Activated CD4-positive, alpha-beta memory T cell treated with anti-CD3 and anti-CD28 coated beads for 36 hours (primary cell): ENCODE measurements at regions of chr14 and their contacts with region 1.

Region 1: DNA sequence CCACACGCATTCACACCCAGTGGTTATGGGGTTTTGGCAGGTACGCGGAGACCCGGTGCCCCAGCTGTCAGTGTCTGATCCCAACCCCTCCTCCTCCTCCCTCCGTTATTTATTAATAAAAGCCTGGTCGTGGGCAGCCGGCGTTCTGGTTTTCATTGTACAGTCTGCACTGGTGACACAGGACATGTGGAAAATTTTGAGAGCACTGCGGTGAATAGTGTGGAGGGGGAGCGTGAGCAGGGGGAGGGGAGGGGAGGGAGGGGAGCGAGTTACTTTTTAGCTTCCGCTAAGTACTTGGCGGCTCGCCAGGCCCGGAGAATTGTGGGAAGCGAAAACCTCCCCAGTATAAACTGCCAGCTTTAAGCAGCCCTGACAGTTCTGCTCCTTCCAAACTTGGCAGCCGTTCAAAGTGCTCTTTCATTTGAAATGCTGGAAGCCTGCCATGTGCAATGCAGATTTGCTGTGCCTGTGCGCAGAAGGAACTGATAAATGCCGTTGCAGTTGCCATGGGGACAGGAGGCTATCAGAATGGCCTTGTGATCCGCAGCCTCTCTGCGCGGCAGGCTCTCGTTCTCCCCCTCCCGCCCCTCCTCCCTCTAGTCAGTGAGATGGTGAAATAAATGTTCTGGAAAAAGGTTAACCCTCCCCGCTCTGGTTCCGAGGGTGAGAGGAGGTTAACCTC is 11.7 kb upstream of the IRF2BPL start:
- DNase-seq: peak; percentile 97
- H3K4me3 Mint-ChIP-seq: peak overlapping the region; percentile 77
- H3K27ac Mint-ChIP-seq: peak overlapping the region; percentile 99
- H3K4me1 Mint-ChIP-seq: peaks cover 88% of the 10 kb centered on the region
- H3K27me3 Mint-ChIP-seq: no peaks in the 10 kb centered on the region

Region 2: DNA sequence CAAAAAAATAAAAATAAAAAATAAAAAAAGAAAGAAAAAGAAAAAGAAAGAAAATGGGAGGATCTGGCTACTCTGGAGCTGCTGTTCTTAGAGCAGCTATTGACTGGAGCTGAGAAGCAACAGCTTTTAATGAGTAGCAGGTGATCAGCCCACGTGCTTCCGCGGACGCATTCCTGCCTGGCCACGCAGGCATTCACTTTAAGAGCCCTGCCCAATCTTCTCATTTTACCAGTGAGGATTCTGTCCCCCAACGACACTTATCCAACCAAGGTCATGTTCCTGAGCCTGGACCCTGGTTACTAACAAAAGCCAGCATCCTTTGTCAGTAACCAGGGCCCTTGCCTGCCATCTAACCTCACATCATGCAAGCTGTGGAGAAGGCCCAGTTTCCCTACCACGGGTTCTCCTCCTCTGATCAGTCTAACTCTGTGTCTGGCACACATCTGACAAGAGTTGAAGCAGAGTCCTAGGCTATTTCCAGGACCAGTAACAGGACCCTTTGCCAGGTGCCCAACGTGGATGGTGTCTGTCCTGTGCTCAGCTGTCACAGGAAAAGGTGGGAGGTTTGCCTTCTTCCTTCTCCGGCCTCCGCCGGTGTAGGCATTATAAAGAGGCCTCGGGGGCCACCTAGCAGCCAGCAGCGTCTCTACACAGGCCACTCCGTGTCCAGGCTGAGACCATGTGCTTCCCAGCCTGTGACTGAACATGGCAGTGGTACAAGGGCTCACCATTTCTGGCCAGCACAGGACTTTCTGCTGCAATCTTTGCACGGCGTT is 949.4 kb before region 1 on chr14:
- CTCF ChIA-PET with region 1: no interaction called
- POLR2A ChIA-PET with region 1: no interaction called
- intact Hi-C with region 1: no loop called
- DNase-seq: no peak
- H3K4me3 Mint-ChIP-seq: no peak overlapping the region
- H3K27ac Mint-ChIP-seq: no peak overlapping the region
- H3K4me1 Mint-ChIP-seq: no peaks in the 10 kb centered on the region
- H3K27me3 Mint-ChIP-seq: no peaks in the 10 kb centered on the region

Region 3: DNA sequence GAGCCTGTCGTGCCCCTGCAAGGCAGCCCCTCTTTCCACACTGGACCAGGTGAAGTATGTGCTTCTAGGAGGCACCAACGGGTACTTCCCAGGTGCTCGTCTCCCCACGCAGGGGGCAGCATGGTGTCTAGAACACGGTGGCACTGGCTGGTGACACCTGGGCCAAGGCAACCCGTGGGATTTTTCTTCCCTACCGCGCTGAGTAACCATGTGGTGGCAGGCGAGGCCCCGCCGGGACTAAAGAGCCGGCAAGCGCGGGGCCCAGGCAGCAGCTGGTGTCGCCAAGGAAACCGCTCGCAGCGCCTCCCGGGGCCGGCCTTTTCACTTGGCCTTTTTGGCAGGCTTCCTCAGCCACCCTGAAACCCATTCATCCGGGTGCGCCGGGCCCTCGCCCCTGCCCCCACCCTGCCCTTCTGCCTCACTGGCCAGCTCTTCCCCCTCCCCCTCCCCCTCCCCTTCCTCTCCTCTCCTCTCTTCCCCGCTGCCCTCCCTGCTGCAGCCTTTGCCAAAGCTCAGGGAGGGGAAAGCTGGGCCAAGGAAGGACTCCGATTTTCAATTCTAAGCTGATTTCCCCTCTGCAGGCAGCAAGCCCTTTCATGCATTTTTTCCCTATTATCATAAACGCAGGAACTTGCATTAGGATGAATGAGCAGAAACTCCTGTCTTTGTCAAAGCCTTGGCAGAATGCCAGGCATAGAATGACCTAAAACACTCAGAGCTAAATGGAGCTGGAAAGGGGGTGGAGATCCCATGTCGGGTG is 92.9 kb before region 1 on chr14:
- CTCF ChIA-PET with region 1: interaction called, 10 read pairs
- POLR2A ChIA-PET with region 1: no interaction called
- intact Hi-C with region 1: loop called (anchors 1 kb)
- DNase-seq: peak; percentile 91
- H3K4me3 Mint-ChIP-seq: peak overlapping the region; percentile 29
- H3K27ac Mint-ChIP-seq: peak overlapping the region; percentile 23
- H3K4me1 Mint-ChIP-seq: peaks cover 43% of the 10 kb centered on the region
- H3K27me3 Mint-ChIP-seq: no peaks in the 10 kb centered on the region

Region 4: DNA sequence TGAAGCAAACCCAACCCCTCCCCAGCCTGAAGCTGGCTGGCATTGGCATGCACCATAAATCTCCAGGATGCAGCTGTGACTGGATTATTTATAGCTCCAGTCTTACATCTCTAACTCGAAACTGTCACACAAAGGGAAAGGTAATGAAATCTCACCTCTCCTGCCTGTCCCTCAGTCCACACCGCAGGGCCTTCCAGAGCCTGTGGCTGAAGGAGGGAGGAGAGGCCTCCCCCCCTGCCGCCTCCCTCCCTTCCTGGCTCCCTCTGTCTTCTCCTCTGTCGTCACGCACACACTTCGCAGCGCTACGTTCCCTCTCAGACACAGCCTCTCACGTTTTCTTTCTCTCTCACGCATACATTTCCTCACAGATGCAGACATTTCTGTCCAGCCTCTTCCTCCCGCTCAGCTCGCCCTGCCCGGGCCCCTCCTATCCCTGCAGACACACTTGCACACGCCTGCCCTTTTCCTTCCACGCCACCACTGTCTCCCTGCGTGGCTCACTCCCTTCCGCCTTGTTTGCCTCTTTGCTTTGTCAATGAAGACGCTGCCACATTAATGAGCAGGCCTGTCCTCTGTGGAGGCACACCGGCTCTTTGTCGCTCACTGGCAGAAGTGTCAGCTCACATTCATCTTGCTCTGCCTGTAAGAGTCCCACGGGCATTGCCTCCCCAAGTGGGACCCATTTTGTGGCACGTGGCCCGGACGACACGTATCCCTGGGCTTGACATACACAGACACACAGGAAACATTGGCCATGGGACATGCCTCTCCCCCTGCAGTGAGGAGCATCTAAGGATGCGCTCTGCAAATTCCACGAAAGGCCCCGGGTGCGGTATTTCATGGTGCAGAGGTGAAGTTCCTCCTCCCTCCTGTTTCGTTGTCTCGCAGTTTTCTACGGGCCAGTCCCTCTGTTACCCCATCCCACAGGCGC is 39.6 kb before region 1 on chr14:
- CTCF ChIA-PET with region 1: no interaction called
- POLR2A ChIA-PET with region 1: no interaction called
- intact Hi-C with region 1: no loop called
- DNase-seq: no peak
- H3K4me3 Mint-ChIP-seq: no peak overlapping the region
- H3K27ac Mint-ChIP-seq: no peak overlapping the region
- H3K4me1 Mint-ChIP-seq: peaks cover 10% of the 10 kb centered on the region
- H3K27me3 Mint-ChIP-seq: no peaks in the 10 kb centered on the region

Region 5: DNA sequence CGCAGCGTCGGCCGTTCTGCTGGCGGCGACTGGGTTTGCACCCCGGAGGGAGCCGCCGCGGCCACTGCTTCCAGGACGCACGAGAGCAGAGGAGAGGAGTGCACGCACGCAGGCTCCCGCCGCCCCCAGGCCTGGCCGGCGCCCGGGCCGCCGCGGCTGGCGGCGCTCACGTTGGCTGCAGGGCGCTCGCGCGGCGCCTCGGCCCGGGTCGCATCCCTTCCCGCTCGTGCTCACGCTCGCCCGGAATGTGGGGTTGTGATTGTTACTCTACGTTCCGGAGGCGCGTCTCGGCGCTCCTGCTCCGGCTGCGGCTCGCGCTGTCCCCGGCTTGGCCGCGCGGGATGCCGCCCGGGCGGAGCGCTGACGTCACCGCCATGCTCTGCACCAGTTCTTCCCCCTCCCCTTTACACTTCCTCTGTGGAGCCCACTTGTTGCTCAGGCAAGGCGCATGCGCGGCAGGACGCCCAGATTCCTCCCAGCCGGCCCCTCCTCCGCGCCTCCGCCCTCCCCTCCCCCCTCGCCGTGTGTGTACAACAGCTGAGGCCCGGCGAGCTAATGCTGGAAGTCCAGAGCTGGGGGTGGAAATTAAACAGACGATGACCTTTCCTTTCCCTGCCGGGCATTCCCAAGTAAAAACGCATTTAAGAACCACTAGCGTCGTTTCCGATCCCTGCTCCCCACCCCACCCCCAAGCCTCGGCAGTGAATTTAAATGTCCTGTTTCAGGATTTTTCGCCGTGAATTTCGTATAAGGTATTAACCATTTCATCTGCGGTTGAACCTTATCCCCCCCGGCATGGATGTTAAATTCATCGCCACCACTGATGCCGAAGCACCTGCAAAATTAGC is 11.6 kb before region 1 on chr14 and contains the start of gene IRF2BPL:
- CTCF ChIA-PET with region 1: interaction called, 16 read pairs
- POLR2A ChIA-PET with region 1: interaction called, 23 read pairs
- intact Hi-C with region 1: loop called (anchors 1 kb)
- DNase-seq: peak; percentile 97
- H3K4me3 Mint-ChIP-seq: peak within 1 kb of the TSS; percentile 82
- H3K27ac Mint-ChIP-seq: peak within 1 kb of the TSS; percentile 97
- H3K4me1 Mint-ChIP-seq: peaks cover 50% of the 10 kb centered on the region
- H3K27me3 Mint-ChIP-seq: no peaks in the 10 kb centered on the region
- total RNA-seq, gene IRF2BPL: 38.5 to 41.1 TPM